GM10248 (cell line): ENCODE measurements at regions of chr21 and their contacts with region 1.

Region 1: DNA sequence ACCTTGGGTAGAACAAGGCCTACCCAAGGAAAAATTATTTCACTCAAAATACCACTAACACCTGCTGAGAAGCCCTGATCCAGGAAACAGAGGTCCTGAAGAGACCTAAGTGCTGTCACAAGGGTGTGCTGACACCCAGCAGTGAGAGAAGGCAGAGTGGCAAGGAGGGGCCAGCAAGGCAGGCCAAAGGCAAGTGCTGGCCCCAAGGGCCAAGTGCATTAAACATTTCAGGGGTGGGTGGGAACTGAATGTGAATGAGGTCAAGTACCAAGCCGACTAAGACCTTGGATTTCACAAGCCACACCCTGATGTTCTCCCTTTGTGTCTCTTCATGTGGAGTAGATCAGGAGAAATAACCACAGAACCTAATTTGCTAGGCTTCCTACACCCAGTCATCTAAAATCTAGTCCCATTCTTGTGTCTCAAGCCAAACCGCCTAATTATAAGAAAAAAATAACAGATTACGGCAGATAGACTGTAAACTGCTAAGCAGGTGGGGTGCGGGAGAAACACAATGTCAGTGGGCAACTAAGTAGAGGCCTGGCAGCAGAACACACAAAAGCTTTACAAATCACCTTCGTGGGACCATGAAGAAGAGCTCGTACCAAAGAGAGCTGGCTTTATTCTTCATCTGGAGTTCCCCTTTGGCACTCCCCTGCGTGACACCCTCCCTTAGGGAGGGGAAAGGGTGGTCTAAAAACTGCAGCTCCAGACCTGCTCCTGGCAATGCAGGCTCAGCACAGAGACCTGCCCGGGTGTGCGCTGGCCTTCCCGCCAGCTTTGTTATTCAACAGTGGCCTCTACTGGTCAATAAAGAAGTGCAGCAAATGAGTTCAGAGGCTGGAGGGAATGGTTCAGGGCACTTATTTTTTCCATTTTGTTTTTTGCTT is 8.7 kb downstream of the UBE2G2 start:
- DNase-seq: peak; percentile 79
- CTCF ChIP-seq: peak; percentile 76

Region 2: DNA sequence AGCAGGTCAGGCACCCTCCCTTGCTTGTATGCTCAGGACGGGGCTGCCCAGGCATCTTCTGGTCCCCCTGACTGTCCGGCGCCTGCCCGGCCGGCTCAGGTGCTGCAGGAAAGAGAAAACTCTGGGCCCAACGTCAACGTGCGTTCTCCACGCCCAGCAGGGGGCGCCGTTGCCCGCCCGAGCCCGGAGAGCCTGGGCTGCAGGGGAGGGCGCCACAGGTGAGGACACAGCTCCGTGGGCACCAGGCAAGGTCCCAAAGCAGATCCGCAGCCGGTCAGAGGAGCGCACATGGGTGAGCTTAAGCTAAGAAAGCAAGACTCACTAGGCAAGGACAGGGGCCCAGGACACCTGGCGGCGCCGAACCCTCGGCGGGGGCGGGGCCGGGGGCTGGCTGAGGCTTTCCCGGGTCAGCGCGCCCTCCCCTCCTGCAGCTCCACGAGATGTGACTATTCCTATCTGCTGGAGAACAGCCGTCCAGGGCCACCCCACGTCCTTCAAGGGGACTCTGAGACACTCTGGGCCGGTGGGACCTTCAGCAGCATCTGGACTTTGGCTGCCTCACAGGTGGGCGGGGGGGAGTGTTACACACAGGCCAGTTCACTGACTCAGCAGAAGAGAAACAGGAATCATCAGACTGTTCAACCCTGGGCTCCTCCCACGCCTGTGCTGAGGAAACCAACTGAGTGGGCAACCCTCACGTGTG is 282.3 kb before region 1 on chr21:
- CTCF ChIA-PET with region 1: interaction called, 67 read pairs
- POLR2A ChIA-PET with region 1: no interaction called
- DNase-seq: peak; percentile 85
- CTCF ChIP-seq: peak; percentile 77

Region 3: GRCh38 chr21:44767871-44768831 is 24.8 kb before region 1 on chr21:
- CTCF ChIA-PET with region 1: interaction called, 11 read pairs
- POLR2A ChIA-PET with region 1: no interaction called
- DNase-seq: no peak
- CTCF ChIP-seq: no peak

Region 4: DNA sequence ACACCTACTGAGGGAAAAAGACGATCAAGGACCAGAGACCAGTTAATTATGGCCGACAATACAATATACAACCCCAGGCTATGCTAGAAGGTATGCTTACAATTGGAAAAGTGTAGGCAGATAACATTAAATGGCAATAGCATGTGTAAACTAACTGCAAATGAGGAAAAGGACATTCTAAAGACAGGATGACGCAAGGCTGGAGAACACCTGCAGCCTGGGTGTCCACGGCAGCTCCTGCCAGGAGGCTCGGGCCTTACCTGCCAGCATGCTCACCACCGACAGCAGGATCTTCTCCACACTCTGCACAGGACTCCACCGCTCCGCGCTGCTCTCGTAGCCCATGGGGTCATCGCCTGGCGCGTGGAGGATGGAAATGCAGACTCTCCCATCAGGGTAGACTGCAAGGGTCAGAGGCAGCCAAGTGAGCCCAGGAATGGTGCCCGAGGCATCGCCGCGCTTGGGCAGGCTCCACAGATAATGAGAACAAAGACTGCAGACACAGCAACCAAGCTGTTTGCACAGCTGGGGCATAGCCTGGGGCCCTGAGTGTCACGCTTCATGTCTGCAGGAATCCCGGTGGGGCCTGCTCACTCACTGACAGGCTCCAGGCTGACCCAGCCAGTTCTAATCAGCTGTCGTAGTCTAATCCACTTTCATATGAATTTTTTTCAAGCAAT is 19.5 kb before region 1 on chr21:
- CTCF ChIA-PET with region 1: interaction called, 14 read pairs
- POLR2A ChIA-PET with region 1: no interaction called
- DNase-seq: no peak
- CTCF ChIP-seq: no peak

Region 5: DNA sequence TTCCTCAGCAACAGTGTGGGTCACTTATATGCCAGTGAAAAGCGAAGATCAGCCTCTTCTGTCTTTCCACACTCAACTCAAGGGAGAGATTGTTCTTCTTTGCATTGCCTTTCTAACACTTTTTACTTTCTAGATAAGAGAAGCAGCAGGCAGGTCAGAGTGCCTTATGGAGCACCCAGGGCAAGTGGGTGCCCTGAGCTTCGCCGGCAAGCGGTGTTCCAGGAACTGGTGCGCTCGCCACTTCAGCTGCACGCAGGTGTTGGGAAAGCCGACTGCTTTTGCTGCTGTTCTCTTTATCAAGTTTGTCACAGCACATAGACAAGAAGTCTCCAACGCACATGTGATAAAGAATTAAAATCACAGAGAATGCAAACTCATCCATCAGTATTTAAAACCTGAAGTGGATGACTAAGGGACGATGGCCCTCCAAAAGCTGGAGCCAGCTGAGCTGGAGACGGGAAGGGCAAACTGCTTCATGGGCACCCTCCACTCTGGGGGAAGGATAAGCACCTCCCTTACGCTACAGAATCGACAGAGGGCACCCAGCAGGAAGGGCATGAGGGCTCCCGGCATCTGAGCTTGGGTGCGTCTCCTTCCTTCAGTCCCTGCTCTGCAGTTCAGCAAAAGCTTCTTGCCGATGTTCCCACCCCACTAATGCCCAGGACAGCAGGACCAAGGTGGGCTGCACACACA is 12.0 kb before region 1 on chr21:
- CTCF ChIA-PET with region 1: interaction called, 15 read pairs
- POLR2A ChIA-PET with region 1: no interaction called
- DNase-seq: no peak
- CTCF ChIP-seq: no peak